BJ (cell line): ENCODE measurements at regions of chr3 and their contacts with region 1.

Region 1: DNA sequence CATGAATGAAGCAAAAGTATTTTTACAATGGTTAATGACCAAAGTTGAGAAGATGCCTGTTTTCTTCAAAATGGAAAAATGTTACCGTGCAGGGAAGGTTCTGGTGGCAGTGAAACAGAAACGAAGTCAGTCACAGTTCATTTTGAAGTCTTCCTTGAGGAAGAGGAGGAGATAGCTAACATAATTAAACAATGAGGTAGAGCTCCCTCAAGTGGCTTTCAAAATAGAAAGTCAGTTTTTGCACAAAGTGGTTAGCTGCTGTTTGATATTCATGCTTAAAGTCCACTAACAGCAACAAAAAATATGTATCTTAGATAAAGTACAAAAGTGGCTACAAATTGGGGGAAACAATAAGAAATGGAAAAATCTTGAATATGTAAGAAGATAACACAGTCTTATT is 87.3 kb downstream of the TFG start:
- DNase-seq: no peak
- H3K4me3 ChIP-seq: no peak overlapping the region
- H3K27me3 ChIP-seq: no peaks in the 10 kb centered on the region
- CTCF ChIP-seq: peak; percentile 39

Region 2: DNA sequence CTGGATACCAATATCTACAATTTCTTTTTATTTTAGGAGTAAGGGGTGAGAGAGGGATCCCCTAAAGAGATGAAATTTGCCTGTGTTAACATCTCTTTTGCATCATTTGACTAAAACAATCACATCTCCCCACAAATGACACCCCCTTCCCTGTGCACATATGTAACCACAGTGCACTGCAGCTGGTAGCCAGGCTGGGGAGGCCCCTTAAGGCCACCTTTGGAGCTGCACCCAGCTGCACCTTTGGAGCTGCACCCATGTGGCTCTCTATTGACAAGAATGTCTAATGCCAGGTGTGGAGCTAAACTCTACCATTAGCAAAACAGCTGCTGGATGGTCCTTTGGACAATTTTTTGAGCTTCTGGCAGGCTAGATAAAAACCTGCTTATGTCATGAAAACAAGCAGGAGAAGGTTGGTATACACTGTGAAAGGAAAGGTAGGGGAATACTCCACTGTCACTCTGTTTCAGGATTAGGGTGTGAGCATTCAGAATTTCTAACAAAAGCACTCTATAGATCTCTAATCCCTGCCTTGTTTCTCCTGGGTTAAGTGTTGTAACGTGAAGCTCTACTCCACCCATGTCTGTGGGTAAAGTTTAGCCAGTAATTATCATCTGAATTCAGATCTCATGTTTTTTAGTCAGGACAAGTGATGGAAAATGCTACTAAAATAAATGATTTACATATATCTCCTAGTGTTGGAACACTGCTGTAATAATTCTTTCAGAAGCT is 35.2 kb before region 1 on chr3:
- CTCF ChIA-PET with region 1: interaction called, 15 read pairs
- POLR2A ChIA-PET with region 1: no interaction called
- DNase-seq: no peak
- H3K4me3 ChIP-seq: no peak overlapping the region
- H3K27me3 ChIP-seq: no peaks in the 10 kb centered on the region
- CTCF ChIP-seq: no peak

Region 3: DNA sequence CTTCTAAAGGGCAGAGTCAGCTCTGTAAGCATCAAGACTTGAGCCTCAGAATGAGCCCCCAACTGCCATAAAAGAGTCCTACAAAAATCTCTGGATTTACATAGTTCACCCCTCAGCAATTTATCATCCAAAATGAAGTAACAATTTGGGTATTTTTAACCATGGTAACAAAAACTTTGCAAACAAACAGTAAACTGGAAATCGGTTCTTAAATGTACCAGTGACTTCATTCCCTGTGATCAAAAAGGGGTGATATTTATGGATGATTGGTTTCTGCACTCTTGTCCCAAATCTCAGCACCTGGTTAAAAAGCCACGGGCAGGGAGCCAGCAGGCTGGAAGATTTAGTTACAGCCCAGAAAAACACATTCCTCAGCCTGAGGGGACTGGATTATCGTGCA is 13.7 kb before region 1 on chr3:
- CTCF ChIA-PET with region 1: interaction called, 11 read pairs
- POLR2A ChIA-PET with region 1: no interaction called
- DNase-seq: peak; percentile 39
- H3K4me3 ChIP-seq: no peak overlapping the region
- H3K27me3 ChIP-seq: no peaks in the 10 kb centered on the region
- CTCF ChIP-seq: no peak

Region 4: DNA sequence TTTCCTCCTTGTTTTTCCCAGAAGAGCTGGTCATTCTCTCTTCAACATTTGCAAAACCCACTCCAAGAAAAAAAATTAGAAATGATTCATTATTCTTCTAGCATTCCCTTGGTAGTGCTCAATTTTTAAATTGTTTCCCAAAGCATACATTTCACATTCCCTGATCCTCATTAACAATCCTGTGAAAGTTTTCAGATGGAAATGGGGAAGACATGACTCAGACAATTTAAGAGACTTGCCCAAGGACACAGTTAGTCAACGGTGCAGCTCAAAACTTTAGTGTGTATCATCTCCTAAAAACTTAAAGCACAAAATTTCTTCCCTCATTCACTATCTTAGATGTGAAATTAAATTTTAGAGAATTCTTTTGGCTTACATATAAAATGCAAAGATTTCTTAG is 213.7 kb after region 1 on chr3:
- CTCF ChIA-PET with region 1: no interaction called
- POLR2A ChIA-PET with region 1: no interaction called
- DNase-seq: peak; percentile 89
- H3K4me3 ChIP-seq: no peak overlapping the region
- H3K27me3 ChIP-seq: no peaks in the 10 kb centered on the region
- CTCF ChIP-seq: no peak

Region 5: DNA sequence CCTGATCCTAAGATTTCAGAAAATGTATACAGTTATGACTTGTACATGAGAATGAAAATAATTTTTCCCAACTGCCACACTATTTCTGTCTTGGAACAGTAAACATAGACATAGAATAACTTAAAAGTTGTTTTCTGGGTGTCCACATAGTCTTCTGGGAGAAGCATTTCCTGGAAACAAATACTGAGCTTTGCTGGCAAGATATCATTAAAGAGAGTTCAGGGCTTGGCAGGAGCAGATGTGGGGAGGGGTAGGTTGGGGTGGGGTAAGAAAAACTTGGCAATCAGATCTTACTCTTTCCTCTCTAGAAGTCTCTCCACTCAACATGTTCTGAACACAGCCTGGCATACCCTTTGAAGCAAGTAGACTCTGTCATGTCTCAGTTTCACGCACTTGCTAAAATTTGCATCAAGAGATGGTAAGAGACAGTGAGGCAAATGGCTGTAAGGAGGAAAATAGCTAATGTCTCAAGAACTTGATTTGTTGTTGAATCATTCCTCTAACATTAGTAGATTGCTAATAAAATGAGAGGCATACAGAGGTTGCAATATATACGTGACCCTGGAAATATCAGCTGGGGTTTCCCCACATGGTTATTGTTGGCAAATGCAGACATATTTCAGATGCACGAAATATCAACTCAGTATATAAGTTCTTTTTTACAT is 223.9 kb after region 1 on chr3:
- CTCF ChIA-PET with region 1: no interaction called
- POLR2A ChIA-PET with region 1: no interaction called
- DNase-seq: no peak
- H3K4me3 ChIP-seq: no peak overlapping the region
- H3K27me3 ChIP-seq: no peaks in the 10 kb centered on the region
- CTCF ChIP-seq: no peak